Ascending aorta (tissue), 2 donors: ENCODE measurements at regions of chr20 and their contacts with region 1.

Region 1: GRCh38 chr20:25294459-25295385 is 46.8 kb downstream of the PYGB start:
- DNase-seq: no peak
- H3K4me3 ChIP-seq: no peak overlapping the region
- H3K27ac ChIP-seq: peak overlapping the region; percentile 61 to 64
- H3K4me1 ChIP-seq: peaks cover 7 to 27% of the 10 kb centered on the region in 2 donors
- H3K27me3 ChIP-seq: no peaks in the 10 kb centered on the region
- CTCF ChIP-seq: peak; percentile 57 to 80 (median 66)

Region 2: GRCh38 chr20:25017257-25018115 is 277.2 kb before region 1 on chr20:
- intact Hi-C with region 1: no loop called
- DNase-seq: peak in 1 of 2 donors; percentile 53
- H3K4me3 ChIP-seq: no peak overlapping the region
- H3K27ac ChIP-seq: no peak overlapping the region
- H3K4me1 ChIP-seq: no peaks in the 10 kb centered on the region
- H3K27me3 ChIP-seq: no peaks in the 10 kb centered on the region
- CTCF ChIP-seq: no peak

Region 3: GRCh38 chr20:25195014-25195961 is 99.4 kb before region 1 on chr20 and contains the start of gene ENTPD6:
- intact Hi-C with region 1: loop called (anchors 5 kb)
- DNase-seq: peak; percentile 63 to 93
- H3K4me3 ChIP-seq: peak within 1 kb of the TSS; percentile 78 to 87
- H3K27ac ChIP-seq: peak within 1 kb of the TSS; percentile 75
- H3K4me1 ChIP-seq: peaks cover 0 to 19% of the 10 kb centered on the region in 2 donors
- H3K27me3 ChIP-seq: no peaks in the 10 kb centered on the region
- CTCF ChIP-seq: peak in 2 of 3 experiments; percentile 8 to 38
- total RNA-seq, gene ENTPD6: 66.5 TPM

Region 4: GRCh38 chr20:25390538-25391528 is 96.1 kb after region 1 on chr20 and contains the start of gene ABHD12:
- intact Hi-C with region 1: loop called (anchors 2 kb)
- DNase-seq: peak; percentile 91 to 99
- H3K4me3 ChIP-seq: peak within 1 kb of the TSS; percentile 83 to 99
- H3K27ac ChIP-seq: peak within 1 kb of the TSS; percentile 70 to 91
- H3K4me1 ChIP-seq: peaks cover 0 to 3% of the 10 kb centered on the region in 2 donors
- H3K27me3 ChIP-seq: no peaks in the 10 kb centered on the region
- CTCF ChIP-seq: no peak
- total RNA-seq, gene ABHD12: 24.3 TPM

Region 5: DNA sequence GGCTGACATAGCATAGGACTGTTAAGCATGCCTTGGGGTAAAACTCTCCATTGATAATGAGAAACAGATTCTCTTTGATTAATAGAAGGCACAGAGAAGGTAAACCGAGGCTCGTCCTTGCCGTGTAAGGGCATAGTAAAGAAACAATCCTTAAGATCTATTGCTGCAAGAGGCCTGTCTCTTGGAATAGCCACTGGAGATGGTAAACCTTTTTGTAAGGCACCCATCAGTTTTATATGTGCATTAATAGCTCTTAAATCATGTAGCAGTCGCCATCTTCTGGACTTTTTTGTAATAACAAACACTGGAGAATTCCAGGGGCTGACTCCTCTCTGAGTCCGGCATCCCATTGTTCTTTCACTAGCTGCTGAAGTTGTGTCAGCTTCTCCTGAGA is 104.3 kb after region 1 on chr20:
- intact Hi-C with region 1: loop called (anchors 2 kb)
- DNase-seq: peak in 1 of 2 donors; percentile 66
- H3K4me3 ChIP-seq: no peak overlapping the region
- H3K27ac ChIP-seq: no peak overlapping the region
- H3K4me1 ChIP-seq: no peaks in the 10 kb centered on the region
- H3K27me3 ChIP-seq: peaks cover 4% of the 10 kb centered on the region
- CTCF ChIP-seq: peak; percentile 25 to 71 (median 54)

Region 6: DNA sequence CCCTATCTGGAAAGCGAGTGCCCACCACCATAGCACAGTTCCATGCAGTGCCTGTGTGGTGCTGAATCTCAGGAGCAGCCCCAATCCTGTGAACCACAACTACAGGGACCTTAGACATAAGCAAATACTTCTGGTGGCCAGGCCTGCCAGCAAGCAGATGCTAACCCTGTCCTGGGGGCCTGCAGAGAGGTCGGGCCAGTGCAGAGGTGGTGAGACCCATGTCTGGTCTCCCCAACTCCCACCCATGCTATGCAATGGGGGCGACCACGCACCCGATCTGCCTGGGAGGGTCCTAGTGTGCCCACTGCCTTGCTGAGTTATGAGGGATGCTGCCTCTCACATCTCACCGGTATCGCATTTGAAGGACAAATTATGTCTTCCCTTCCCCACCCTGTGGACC is 553.5 kb after region 1 on chr20:
- intact Hi-C with region 1: no loop called
- DNase-seq: peak in 1 of 2 donors; percentile 1
- H3K4me3 ChIP-seq: no peak overlapping the region
- H3K27ac ChIP-seq: no peak overlapping the region
- H3K4me1 ChIP-seq: peaks cover 0 to 5% of the 10 kb centered on the region in 2 donors
- H3K27me3 ChIP-seq: no peaks in the 10 kb centered on the region
- CTCF ChIP-seq: no peak